Left ventricle myocardium superior (tissue), 1 donor: ENCODE measurements at regions of chr3 and their contacts with region 1.

Region 1: GRCh38 chr3:132535575-132536441 is 61.3 kb upstream of the ACKR4 start:
- DNase-seq: peak; percentile 42
- ATAC-seq: peak; percentile 91

Region 2: DNA sequence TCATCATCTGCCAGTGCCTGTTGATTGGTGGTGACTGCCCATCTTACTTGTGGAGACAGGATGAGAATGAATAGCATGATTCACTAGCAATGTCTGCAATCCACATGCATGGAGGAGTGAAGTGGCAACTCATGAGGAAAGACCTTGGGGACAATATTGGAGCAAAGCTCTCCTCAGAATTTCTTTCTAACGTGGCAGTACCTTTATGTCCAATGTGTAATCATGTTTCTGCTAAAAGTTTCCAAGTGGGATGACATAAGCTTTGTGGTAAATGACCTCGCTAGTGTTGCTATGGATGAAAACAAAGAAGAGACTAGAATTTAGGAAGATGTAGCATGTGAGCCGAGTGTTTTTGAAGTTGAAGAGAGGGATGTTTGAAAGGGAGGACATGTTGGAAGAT is 618.8 kb before region 1 on chr3:
- intact Hi-C with region 1: no loop called
- DNase-seq: no peak
- ATAC-seq: no peak

Region 3: GRCh38 chr3:132641837-132642538 is 106.2 kb after region 1 on chr3:
- intact Hi-C with region 1: loop called (anchors 2 kb)
- DNase-seq: no peak
- ATAC-seq: peak; percentile 61